B cell (primary cell): ENCODE measurements at regions of chr3 and their contacts with region 1.

Region 1: GRCh38 chr3:57555738-57556458 is at the start of gene PDE12:
- DNase-seq: peak; percentile 95
- ATAC-seq: peak; percentile 84
- H3K4me3 ChIP-seq: peak within 1 kb of the TSS; percentile 70 to 90 (median 84)
- H3K4me3 Mint-ChIP-seq: peak within 1 kb of the TSS; percentile 88
- H3K27ac ChIP-seq: peak within 1 kb of the TSS; percentile 91 to 100
- H3K27ac Mint-ChIP-seq: peak within 1 kb of the TSS; percentile 100
- H3K4me1 ChIP-seq: peaks cover 14 to 30% of the 10 kb centered on the region in 2 donors
- H3K4me1 Mint-ChIP-seq: peaks cover 36% of the 10 kb centered on the region
- H3K27me3 ChIP-seq: no peaks in the 10 kb centered on the region
- H3K27me3 Mint-ChIP-seq: no peaks in the 10 kb centered on the region
- CTCF ChIP-seq: no peak
- total RNA-seq, gene PDE12: 18.3 and 19.6 TPM in 2 replicates

Region 2: GRCh38 chr3:57164657-57165573 is 391.0 kb before region 1 on chr3 and contains the start of gene IL17RD:
- CTCF ChIA-PET with region 1: no interaction called
- POLR2A ChIA-PET with region 1: no interaction called
- intact Hi-C with region 1: loop called (anchors 2 kb)
- DNase-seq: peak; percentile 76
- ATAC-seq: peak; percentile 91
- H3K4me3 ChIP-seq: peak within 1 kb of the TSS in 4 of 5 experiments; percentile 37 to 64 (median 58)
- H3K4me3 Mint-ChIP-seq: peak within 1 kb of the TSS; percentile 89
- H3K27ac ChIP-seq: no peak within 1 kb of the TSS
- H3K27ac Mint-ChIP-seq: peak within 1 kb of the TSS; percentile 42
- H3K4me1 ChIP-seq: peaks cover 14 to 20% of the 10 kb centered on the region in 2 donors
- H3K4me1 Mint-ChIP-seq: peaks cover 10% of the 10 kb centered on the region
- H3K27me3 ChIP-seq: peaks cover 0 to 77% (median 34%) of the 10 kb centered on the region in 4 experiments
- H3K27me3 Mint-ChIP-seq: peaks cover 56% of the 10 kb centered on the region
- CTCF ChIP-seq: no peak
- total RNA-seq, gene IL17RD: 0.02 and 0.05 TPM in 2 replicates

Region 3: GRCh38 chr3:57234613-57235575 is 321.0 kb before region 1 on chr3:
- CTCF ChIA-PET with region 1: no interaction called
- POLR2A ChIA-PET with region 1: no interaction called
- intact Hi-C with region 1: loop called (anchors 10 kb)
- DNase-seq: peak; percentile 78
- ATAC-seq: peak; percentile 76
- H3K4me3 ChIP-seq: peak overlapping the region in 2 of 5 experiments; percentile 17 to 45
- H3K4me3 Mint-ChIP-seq: peak overlapping the region; percentile 73
- H3K27ac ChIP-seq: peak overlapping the region; percentile 76 to 92
- H3K27ac Mint-ChIP-seq: peak overlapping the region; percentile 88
- H3K4me1 ChIP-seq: peaks cover 26 to 30% of the 10 kb centered on the region in 2 donors
- H3K4me1 Mint-ChIP-seq: peaks cover 41% of the 10 kb centered on the region
- H3K27me3 ChIP-seq: no peaks in the 10 kb centered on the region
- H3K27me3 Mint-ChIP-seq: no peaks in the 10 kb centered on the region
- CTCF ChIP-seq: no peak

Region 4: GRCh38 chr3:57538452-57538851 is 17.4 kb before region 1 on chr3:
- CTCF ChIA-PET with region 1: no interaction called
- POLR2A ChIA-PET with region 1: no interaction called
- intact Hi-C with region 1: no loop called
- DNase-seq: no peak
- ATAC-seq: no peak
- H3K4me3 ChIP-seq: no peak overlapping the region
- H3K4me3 Mint-ChIP-seq: no peak overlapping the region
- H3K27ac ChIP-seq: no peak overlapping the region
- H3K27ac Mint-ChIP-seq: no peak overlapping the region
- H3K4me1 ChIP-seq: no peaks in the 10 kb centered on the region
- H3K4me1 Mint-ChIP-seq: no peaks in the 10 kb centered on the region
- H3K27me3 ChIP-seq: no peaks in the 10 kb centered on the region
- H3K27me3 Mint-ChIP-seq: no peaks in the 10 kb centered on the region
- CTCF ChIP-seq: no peak

Region 5: GRCh38 chr3:57637391-57637790 is 81.5 kb after region 1 on chr3:
- CTCF ChIA-PET with region 1: no interaction called
- POLR2A ChIA-PET with region 1: no interaction called
- intact Hi-C with region 1: no loop called
- DNase-seq: no peak
- ATAC-seq: no peak
- H3K4me3 ChIP-seq: no peak overlapping the region
- H3K4me3 Mint-ChIP-seq: no peak overlapping the region
- H3K27ac ChIP-seq: no peak overlapping the region
- H3K27ac Mint-ChIP-seq: no peak overlapping the region
- H3K4me1 ChIP-seq: no peaks in the 10 kb centered on the region
- H3K4me1 Mint-ChIP-seq: no peaks in the 10 kb centered on the region
- H3K27me3 ChIP-seq: no peaks in the 10 kb centered on the region
- H3K27me3 Mint-ChIP-seq: no peaks in the 10 kb centered on the region
- CTCF ChIP-seq: no peak

Region 6: GRCh38 chr3:57675530-57675929 is 119.6 kb after region 1 on chr3:
- CTCF ChIA-PET with region 1: no interaction called
- POLR2A ChIA-PET with region 1: no interaction called
- intact Hi-C with region 1: loop called (anchors 1 kb)
- DNase-seq: no peak
- ATAC-seq: no peak
- H3K4me3 ChIP-seq: no peak overlapping the region
- H3K4me3 Mint-ChIP-seq: peak overlapping the region; percentile 38
- H3K27ac ChIP-seq: peak overlapping the region in 1 of 2 donors; percentile 44
- H3K27ac Mint-ChIP-seq: peak overlapping the region; percentile 88
- H3K4me1 ChIP-seq: peaks cover 31 to 35% of the 10 kb centered on the region in 2 donors
- H3K4me1 Mint-ChIP-seq: peaks cover 56% of the 10 kb centered on the region
- H3K27me3 ChIP-seq: no peaks in the 10 kb centered on the region
- H3K27me3 Mint-ChIP-seq: no peaks in the 10 kb centered on the region
- CTCF ChIP-seq: no peak

Region 7: GRCh38 chr3:57755668-57756527 is 200.0 kb after region 1 on chr3 and contains the start of gene SLMAP:
- CTCF ChIA-PET with region 1: interaction called, 5 read pairs
- POLR2A ChIA-PET with region 1: interaction called, 5 read pairs
- intact Hi-C with region 1: loop called (anchors 1 kb)
- DNase-seq: peak; percentile 96
- ATAC-seq: peak; percentile 93
- H3K4me3 ChIP-seq: peak within 1 kb of the TSS; percentile 77 to 99 (median 95)
- H3K4me3 Mint-ChIP-seq: peak within 1 kb of the TSS; percentile 99
- H3K27ac ChIP-seq: peak within 1 kb of the TSS; percentile 56 to 93
- H3K27ac Mint-ChIP-seq: peak within 1 kb of the TSS; percentile 93
- H3K4me1 ChIP-seq: peaks cover 23 to 26% of the 10 kb centered on the region in 2 donors
- H3K4me1 Mint-ChIP-seq: peaks cover 30% of the 10 kb centered on the region
- H3K27me3 ChIP-seq: no peaks in the 10 kb centered on the region
- H3K27me3 Mint-ChIP-seq: no peaks in the 10 kb centered on the region
- CTCF ChIP-seq: no peak
- total RNA-seq, gene SLMAP: 67.2 and 70.8 TPM in 2 replicates

Region 8: DNA sequence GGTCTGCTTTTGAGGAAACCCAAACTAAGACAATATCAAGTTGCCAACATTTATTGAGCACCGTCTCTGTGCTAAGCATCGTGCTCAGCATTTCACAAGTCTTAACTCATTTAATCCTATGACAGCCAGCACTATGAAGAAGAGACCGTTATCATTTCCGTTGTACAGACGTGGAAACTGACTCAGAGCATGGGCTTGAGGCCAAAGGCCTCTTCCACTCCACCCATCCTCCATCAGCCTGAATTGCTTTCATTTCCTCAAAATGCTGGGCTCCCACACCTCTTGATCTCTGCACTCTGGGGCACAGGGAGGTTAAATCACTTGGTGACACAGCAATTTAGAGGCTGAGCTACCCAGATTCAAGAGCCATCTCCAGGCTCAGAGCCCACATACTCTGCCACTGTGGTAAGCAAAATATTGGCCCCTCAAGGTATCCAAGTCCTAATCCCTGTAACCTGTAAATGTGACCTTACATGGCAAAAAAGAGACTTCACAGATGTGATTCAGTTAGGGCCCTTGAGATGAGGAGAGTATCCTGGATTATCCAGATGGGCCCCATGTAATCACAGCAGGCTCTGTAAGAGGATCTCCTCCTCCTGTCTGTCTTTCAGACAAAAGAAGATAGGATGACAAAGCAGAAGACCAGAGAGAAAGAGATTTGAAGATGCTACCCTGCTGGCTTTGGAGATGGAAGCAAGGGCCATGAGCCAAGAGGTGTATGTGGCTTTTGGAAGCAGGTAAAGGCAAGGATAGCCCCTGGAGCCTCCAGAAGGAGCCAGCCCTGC is 428.0 kb after region 1 on chr3:
- CTCF ChIA-PET with region 1: no interaction called
- POLR2A ChIA-PET with region 1: no interaction called
- intact Hi-C with region 1: no loop called
- DNase-seq: peak; percentile 77
- ATAC-seq: peak; percentile 98
- H3K4me3 ChIP-seq: no peak overlapping the region
- H3K4me3 Mint-ChIP-seq: no peak overlapping the region
- H3K27ac ChIP-seq: peak overlapping the region in 1 of 2 donors; percentile 3
- H3K27ac Mint-ChIP-seq: peak overlapping the region; percentile 37
- H3K4me1 ChIP-seq: peaks cover 27 to 31% of the 10 kb centered on the region in 2 donors
- H3K4me1 Mint-ChIP-seq: peaks cover 30% of the 10 kb centered on the region
- H3K27me3 ChIP-seq: peaks cover 0 to 8% (median 3%) of the 10 kb centered on the region in 4 experiments
- H3K27me3 Mint-ChIP-seq: peaks cover 3% of the 10 kb centered on the region
- CTCF ChIP-seq: no peak

Region 9: GRCh38 chr3:58116161-58116955 is 560.5 kb after region 1 on chr3:
- CTCF ChIA-PET with region 1: no interaction called
- POLR2A ChIA-PET with region 1: no interaction called
- intact Hi-C with region 1: loop called (anchors 5 kb)
- DNase-seq: peak; percentile 95
- ATAC-seq: peak; percentile 93
- H3K4me3 ChIP-seq: peak overlapping the region in 1 of 5 experiments; percentile 1
- H3K4me3 Mint-ChIP-seq: peak overlapping the region; percentile 77
- H3K27ac ChIP-seq: peak overlapping the region; percentile 80 to 89
- H3K27ac Mint-ChIP-seq: peak overlapping the region; percentile 95
- H3K4me1 ChIP-seq: peaks cover 62 to 74% of the 10 kb centered on the region in 2 donors
- H3K4me1 Mint-ChIP-seq: peaks cover 73% of the 10 kb centered on the region
- H3K27me3 ChIP-seq: no peaks in the 10 kb centered on the region
- H3K27me3 Mint-ChIP-seq: no peaks in the 10 kb centered on the region
- CTCF ChIP-seq: no peak